HCT116 (cell line): ENCODE measurements at regions of chr15 and their contacts with region 1.

Region 1: GRCh38 chr15:62649793-62650420 is 392.6 kb upstream of the TPM1 start:
- DNase-seq: no peak
- ATAC-seq: no peak
- H3K4me3 ChIP-seq: no peak overlapping the region
- H3K27ac ChIP-seq: no peak overlapping the region
- H3K4me1 ChIP-seq: peaks cover 12 to 22% of the 10 kb centered on the region in 2 experiments
- H3K27me3 ChIP-seq: no peaks in the 10 kb centered on the region
- CTCF ChIP-seq: no peak
- POLR2A ChIP-seq: no peak
- RAD21 ChIP-seq: no peak

Region 2: GRCh38 chr15:62389885-62390790 is 259.8 kb before region 1 on chr15:
- CTCF ChIA-PET with region 1: no interaction called
- POLR2A ChIA-PET with region 1: no interaction called
- RAD21 ChIA-PET with region 1: no interaction called
- intact Hi-C with region 1: loop called (anchors 5 kb)
- DNase-seq: peak; percentile 39
- ATAC-seq: peak; percentile 86
- H3K4me3 ChIP-seq: peak within 1 kb of the TSS; percentile 92 to 96
- H3K27ac ChIP-seq: peak within 1 kb of the TSS; percentile 51
- H3K4me1 ChIP-seq: peaks cover 11 to 13% of the 10 kb centered on the region in 2 experiments; a peak in 3 of 4 replicates
- H3K27me3 ChIP-seq: no peaks in the 10 kb centered on the region
- CTCF ChIP-seq: no peak
- POLR2A ChIP-seq: peak; percentile 96
- RAD21 ChIP-seq: no peak

Region 3: GRCh38 chr15:62482785-62483429 is 167.0 kb before region 1 on chr15:
- CTCF ChIA-PET with region 1: no interaction called
- POLR2A ChIA-PET with region 1: no interaction called
- RAD21 ChIA-PET with region 1: no interaction called
- intact Hi-C with region 1: loop called (anchors 10 kb)
- DNase-seq: peak; percentile 24
- ATAC-seq: peak; percentile 98
- H3K4me3 ChIP-seq: no peak overlapping the region
- H3K27ac ChIP-seq: no peak overlapping the region
- H3K4me1 ChIP-seq: no peaks in the 10 kb centered on the region
- H3K27me3 ChIP-seq: no peaks in the 10 kb centered on the region
- CTCF ChIP-seq: peak; percentile 14 to 60 (median 58); a peak in 4 of 6 replicates
- POLR2A ChIP-seq: no peak
- RAD21 ChIP-seq: peak; percentile 30; the same call in 1 of the 2 replicates

Region 4: DNA sequence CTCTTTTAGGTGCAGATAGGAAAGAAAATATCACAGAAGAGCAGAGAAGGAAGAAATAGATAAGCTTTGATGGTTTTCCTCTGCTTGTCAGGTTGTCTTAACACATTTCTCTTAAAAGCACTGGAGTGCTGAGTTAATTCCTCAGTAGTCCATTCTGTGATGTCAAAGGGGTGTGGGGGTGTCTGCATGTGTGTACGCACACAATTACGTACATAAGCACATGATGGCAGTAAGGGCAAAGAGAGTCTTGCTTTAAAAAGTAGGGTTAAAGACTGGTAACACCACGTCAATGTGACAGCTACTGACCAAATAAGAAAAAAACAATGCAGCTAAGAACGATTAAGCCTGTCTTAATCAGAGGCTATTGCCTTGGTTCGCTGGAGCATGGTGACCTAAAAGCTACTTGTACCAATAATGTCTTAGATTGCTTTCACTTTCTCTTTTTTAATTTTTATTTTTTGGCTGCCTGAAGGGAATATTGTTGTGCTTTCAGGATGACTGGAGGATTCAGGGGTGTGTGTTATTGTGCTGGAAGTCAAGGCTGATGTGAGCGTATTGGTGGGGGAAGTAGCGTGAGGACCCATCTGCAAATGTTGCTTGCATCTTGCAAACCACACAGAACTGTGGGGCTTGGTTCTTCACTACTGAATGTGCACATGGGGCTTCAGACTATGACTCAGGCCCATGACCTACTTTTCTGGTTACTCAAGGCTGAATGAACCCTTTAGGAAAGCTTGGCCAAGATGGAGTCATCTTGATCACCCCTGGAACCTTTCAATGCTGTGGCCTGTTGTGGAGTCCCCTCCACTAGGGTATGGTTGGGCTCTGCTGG is 25.1 kb before region 1 on chr15:
- CTCF ChIA-PET with region 1: no interaction called
- POLR2A ChIA-PET with region 1: no interaction called
- RAD21 ChIA-PET with region 1: no interaction called
- intact Hi-C with region 1: no loop called
- DNase-seq: no peak
- ATAC-seq: no peak
- H3K4me3 ChIP-seq: no peak overlapping the region
- H3K27ac ChIP-seq: no peak overlapping the region
- H3K4me1 ChIP-seq: no peaks in the 10 kb centered on the region; a peak in 1 of 4 replicates
- H3K27me3 ChIP-seq: no peaks in the 10 kb centered on the region
- CTCF ChIP-seq: no peak
- POLR2A ChIP-seq: no peak
- RAD21 ChIP-seq: no peak

Region 5: DNA sequence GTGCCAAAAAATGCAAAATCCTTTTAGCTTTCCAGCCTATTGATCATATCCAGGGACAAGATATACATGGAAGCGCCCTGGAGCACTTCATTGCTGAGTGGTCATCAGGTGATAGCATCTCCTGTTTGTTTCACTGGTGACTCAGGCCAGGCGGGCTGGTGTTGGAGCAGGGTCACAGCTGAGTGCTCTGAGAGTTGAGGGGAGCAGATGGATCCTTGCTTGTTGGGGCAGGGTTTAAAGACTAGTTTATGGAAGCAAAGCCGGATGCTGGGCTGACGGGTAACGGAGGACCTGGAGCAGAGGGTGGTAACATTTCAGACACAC is 12.4 kb before region 1 on chr15:
- CTCF ChIA-PET with region 1: no interaction called
- POLR2A ChIA-PET with region 1: no interaction called
- RAD21 ChIA-PET with region 1: no interaction called
- intact Hi-C with region 1: no loop called
- DNase-seq: no peak
- ATAC-seq: no peak
- H3K4me3 ChIP-seq: no peak overlapping the region
- H3K27ac ChIP-seq: no peak overlapping the region
- H3K4me1 ChIP-seq: no peaks in the 10 kb centered on the region
- H3K27me3 ChIP-seq: no peaks in the 10 kb centered on the region
- CTCF ChIP-seq: no peak
- POLR2A ChIP-seq: no peak
- RAD21 ChIP-seq: no peak

Region 6: DNA sequence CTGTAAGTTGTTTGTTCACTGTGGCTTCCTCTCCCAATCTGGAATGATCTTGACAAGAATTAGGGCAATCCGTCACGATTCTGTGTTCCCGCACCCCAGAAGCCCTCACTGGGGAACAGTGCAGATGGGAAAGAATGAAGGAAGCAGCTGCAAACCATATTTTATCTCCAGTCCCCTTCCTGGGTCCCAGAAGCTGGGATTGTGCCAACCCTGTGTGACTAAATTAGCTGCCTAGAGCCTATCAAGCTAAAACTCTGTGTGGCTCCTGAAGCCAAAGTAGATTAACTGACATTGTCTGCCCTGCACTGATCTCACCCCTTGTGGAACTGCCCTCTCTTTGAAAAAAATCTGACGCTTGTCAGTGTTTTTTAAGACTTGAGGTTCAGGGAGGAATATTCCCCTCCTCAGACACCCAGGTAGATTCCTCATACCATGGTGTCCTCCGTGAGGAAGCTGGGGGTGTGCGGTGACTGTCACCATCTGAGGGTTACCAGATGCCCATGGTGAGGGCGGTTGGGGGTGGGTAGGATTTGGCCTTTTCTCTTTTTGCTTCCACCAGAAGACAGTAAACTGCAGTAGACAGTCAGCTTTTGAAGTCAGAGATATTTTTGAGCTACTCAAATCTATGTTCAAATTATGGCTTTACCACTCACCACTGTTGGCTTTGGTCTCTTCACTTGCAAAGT is 34.4 kb after region 1 on chr15:
- CTCF ChIA-PET with region 1: no interaction called
- POLR2A ChIA-PET with region 1: no interaction called
- RAD21 ChIA-PET with region 1: no interaction called
- intact Hi-C with region 1: no loop called
- DNase-seq: no peak
- ATAC-seq: no peak
- H3K4me3 ChIP-seq: no peak overlapping the region
- H3K27ac ChIP-seq: no peak overlapping the region
- H3K4me1 ChIP-seq: no peaks in the 10 kb centered on the region
- H3K27me3 ChIP-seq: no peaks in the 10 kb centered on the region
- CTCF ChIP-seq: no peak
- POLR2A ChIP-seq: no peak
- RAD21 ChIP-seq: no peak

Region 7: DNA sequence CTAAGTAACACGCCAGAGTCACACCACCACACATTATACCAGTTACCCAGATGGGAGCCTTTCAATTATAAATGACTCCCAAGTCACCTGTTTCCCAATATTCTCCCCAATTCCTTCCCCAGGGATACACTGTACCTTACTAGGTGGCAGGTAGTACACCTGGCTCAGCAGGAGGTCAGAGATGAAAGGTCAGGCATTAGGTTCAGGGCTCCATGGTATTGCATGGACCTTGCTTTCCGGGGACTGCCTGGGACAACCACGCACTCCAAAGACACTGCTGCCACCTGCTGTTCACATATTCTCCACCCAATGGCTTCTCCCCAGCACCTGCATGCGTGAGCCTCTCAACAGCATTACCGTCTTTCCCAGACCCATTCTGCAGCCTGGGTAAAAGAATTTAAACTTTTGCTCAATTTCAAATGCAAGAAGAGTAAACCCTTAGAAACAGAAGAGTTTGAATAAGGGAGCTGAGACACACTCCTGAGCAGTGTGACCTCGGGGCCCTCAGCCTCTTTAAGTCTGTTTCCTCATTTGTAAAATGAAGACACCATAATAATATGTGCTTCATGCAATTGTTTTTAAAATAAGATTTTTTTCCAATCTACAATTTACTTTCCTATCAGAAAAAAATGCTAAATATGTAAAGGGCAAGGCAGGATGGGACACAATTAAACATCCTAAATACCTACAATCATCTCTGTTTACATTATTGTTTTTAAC is 443.7 kb after region 1 on chr15:
- CTCF ChIA-PET with region 1: no interaction called
- POLR2A ChIA-PET with region 1: no interaction called
- RAD21 ChIA-PET with region 1: interaction called in 1 of 2 experiments, 4 read pairs
- intact Hi-C with region 1: loop called (anchors 2 kb)
- DNase-seq: peak; percentile 65
- ATAC-seq: peak; percentile 100
- H3K4me3 ChIP-seq: no peak overlapping the region
- H3K27ac ChIP-seq: no peak overlapping the region
- H3K4me1 ChIP-seq: no peaks in the 10 kb centered on the region
- H3K27me3 ChIP-seq: no peaks in the 10 kb centered on the region
- CTCF ChIP-seq: peak; percentile 84 to 94 (median 89)
- POLR2A ChIP-seq: no peak
- RAD21 ChIP-seq: peak; percentile 96